A549 (cell line): ENCODE measurements at regions of chr20 and their contacts with region 1.

Region 1: GRCh38 chr20:31560094-31560899 is 44.8 kb upstream of the ID1 start:
- DNase-seq: peak; percentile 78 to 94
- ATAC-seq: peak; percentile 56 to 70
- H3K4me3 ChIP-seq: no peak overlapping the region
- H3K27ac ChIP-seq: peak overlapping the region; percentile 90 to 97
- H3K4me1 ChIP-seq: peaks cover 48% of the 10 kb centered on the region
- CTCF ChIP-seq: peak; percentile 95
- EP300 ChIP-seq: no peak
- POLR2A ChIP-seq: no peak
- RAD21 ChIP-seq: peak; percentile 65 to 66

Region 2: DNA sequence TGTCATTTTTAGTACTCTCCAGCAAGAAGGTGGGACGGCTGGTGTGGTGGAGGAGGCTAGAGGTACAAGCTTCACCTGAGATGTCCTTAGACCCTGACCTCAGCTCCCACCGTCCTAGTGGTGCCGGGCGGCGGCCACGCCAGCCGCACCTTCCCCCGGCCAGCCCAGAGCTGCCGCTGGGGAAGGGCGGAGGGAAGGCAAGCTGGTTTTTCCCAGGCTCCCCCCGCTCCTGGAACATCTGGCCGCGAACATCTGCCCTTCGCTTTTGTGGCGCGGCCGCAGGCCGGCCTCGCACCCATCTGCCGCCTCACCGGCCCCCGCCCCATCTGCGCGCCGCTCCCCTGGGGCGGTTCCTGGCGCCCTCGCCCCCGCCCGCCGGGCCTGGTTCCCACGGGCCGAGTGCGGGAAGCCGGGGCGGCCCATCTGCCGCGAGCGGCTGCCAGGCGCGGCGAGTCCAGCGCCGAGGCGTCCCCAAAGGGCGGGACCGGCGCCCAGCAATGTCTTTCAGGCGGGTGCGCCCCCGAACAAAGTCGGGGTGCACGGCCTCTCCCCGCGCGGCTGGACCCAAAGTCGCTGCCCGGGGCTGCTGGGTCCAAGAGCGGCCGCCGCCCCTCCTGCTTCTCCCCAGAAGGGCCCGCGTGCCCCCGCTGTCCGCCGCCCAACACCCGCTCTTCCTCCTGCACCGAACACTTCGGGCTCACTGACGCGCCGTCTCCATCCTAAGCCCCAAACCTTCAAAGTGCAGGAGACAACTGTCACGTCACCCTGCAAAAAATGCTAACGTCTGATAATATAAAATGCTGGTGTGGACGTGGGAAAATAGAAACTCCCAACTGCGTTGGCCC is 27.5 kb after region 1 on chr20:
- CTCF ChIA-PET with region 1: interaction called, 49 read pairs
- POLR2A ChIA-PET with region 1: interaction called, 19 read pairs
- DNase-seq: no peak
- ATAC-seq: peak; percentile 72 to 81
- H3K4me3 ChIP-seq: peak overlapping the region; percentile 45
- H3K27ac ChIP-seq: peak overlapping the region; percentile 98
- H3K4me1 ChIP-seq: peaks cover 32% of the 10 kb centered on the region
- CTCF ChIP-seq: no peak
- EP300 ChIP-seq: no peak
- POLR2A ChIP-seq: peak; percentile 2; the same call in 1 of the 2 replicates
- RAD21 ChIP-seq: no peak

Region 3: GRCh38 chr20:31595654-31596411 is 35.5 kb after region 1 on chr20:
- CTCF ChIA-PET with region 1: interaction called, 966 read pairs
- POLR2A ChIA-PET with region 1: interaction called, 19 read pairs
- DNase-seq: peak; percentile 74 to 95
- ATAC-seq: peak; percentile 68 to 74
- H3K4me3 ChIP-seq: peak overlapping the region; percentile 62
- H3K27ac ChIP-seq: peak overlapping the region; percentile 98
- H3K4me1 ChIP-seq: peaks cover 48% of the 10 kb centered on the region
- CTCF ChIP-seq: no peak
- EP300 ChIP-seq: peak in 1 of 2 experiments; percentile 55; a peak in 2 of 5 replicates
- POLR2A ChIP-seq: peak; percentile 42
- RAD21 ChIP-seq: no peak